ENCODE measurements at regions of chr3 and their contacts with region 1.

Region 1: GRCh38 chr3:65439641-65440284 is 599.0 kb downstream of the MAGI1 start:
- DNase-seq: peak; percentile 44 to 61
- ATAC-seq: peak; percentile 84 to 93 (median 90)
- H3K4me3 ChIP-seq: no peak overlapping the region
- H3K27ac ChIP-seq: no peak overlapping the region
- H3K4me1 ChIP-seq: peaks cover 0 to 13% (median 6%) of the 10 kb centered on the region in 9 donors
- H3K27me3 ChIP-seq: no peaks in the 10 kb centered on the region
- CTCF ChIP-seq: peak; percentile 36 to 81 (median 69)

Region 2: GRCh38 chr3:65672871-65673815 is 233.4 kb after region 1 on chr3:
- intact Hi-C with region 1: loop called in 9 of 10 experiments (anchors 2 to 10 kb)
- DNase-seq: peak; percentile 55 to 70
- ATAC-seq: peak in 6 of 8 donors; percentile 25 to 76 (median 62)
- H3K4me3 ChIP-seq: no peak overlapping the region
- H3K27ac ChIP-seq: no peak overlapping the region
- H3K4me1 ChIP-seq: peaks cover 0 to 25% (median 9%) of the 10 kb centered on the region in 9 donors
- H3K27me3 ChIP-seq: no peaks in the 10 kb centered on the region
- CTCF ChIP-seq: peak; percentile 58 to 90 (median 83)

Region 3: DNA sequence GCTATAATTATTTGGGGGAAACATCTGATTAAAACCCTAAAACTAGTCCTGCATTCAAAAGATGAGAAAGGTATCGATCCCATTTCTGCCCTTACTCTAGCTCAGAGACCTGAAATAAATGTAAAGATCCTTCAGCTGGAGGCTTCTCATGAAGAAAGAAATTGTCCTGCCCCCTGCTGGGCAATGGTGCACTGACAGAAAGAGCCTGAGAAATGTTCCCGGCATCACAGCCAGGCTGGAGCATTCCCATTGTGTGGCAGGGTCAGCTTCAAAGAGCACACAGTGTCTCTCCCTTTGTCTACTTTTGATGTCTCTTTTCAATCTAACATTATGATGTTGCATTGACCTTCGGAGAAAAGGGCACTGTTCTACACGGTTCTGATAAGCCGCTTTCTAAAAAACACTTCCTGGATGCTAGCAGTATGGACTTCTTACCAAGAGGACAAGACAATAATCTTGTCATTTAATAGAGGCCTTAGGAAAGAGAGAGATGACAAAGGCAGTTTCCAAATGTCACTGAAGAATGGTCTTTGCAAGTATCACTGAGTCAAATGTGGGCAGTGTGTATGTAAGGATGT is 311.4 kb after region 1 on chr3:
- intact Hi-C with region 1: loop called in 1 of 10 experiments (anchors 5 kb)
- DNase-seq: peak; percentile 26 to 38
- ATAC-seq: peak; percentile 29 to 82 (median 68)
- H3K4me3 ChIP-seq: no peak overlapping the region
- H3K27ac ChIP-seq: no peak overlapping the region
- H3K4me1 ChIP-seq: peaks cover 0 to 30% (median 0%) of the 10 kb centered on the region in 9 donors
- H3K27me3 ChIP-seq: no peaks in the 10 kb centered on the region
- CTCF ChIP-seq: peak; percentile 42 to 81 (median 70)

Region 4: DNA sequence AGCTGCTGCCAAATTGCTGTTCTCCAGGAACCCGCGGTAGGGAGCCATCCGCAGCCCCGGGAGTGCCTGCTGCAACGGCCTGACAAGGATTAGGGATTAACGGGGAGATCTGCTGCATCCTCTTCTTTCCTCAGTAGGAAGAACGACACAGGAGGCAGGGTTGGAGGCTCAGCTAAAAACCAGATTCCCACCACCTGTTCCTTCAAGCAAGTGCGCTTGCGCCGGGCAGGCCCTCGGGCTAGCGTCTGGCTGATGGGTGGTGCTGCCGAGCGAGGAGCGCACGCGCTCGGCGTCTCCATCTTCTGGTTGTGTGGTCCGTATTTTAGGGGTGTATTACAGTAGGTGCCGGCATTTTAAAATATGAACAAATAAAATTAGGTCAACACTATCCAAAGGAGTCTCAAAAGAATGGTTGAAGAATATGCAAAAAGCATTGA is 755.6 kb after region 1 on chr3:
- intact Hi-C with region 1: loop called in 1 of 10 experiments (anchors 10 kb)
- DNase-seq: peak; percentile 50 to 57
- ATAC-seq: peak; percentile 70 to 87 (median 80)
- H3K4me3 ChIP-seq: peak overlapping the region; percentile 4 to 52 (median 30)
- H3K27ac ChIP-seq: peak overlapping the region in 7 of 10 donors; percentile 65 to 85 (median 74)
- H3K4me1 ChIP-seq: peaks cover 0 to 12% (median 0%) of the 10 kb centered on the region in 9 donors
- H3K27me3 ChIP-seq: peaks cover 0 to 18% (median 0%) of the 10 kb centered on the region in 7 donors
- CTCF ChIP-seq: peak in 6 of 9 donors; percentile 19 to 45 (median 32)